OCI-LY7 (cell line): ENCODE measurements at regions of chr2 and their contacts with region 1.

Region 1: GRCh38 chr2:65396348-65397026 is 35.9 kb downstream of the SPRED2 start:
- DNase-seq: peak; percentile 57
- H3K4me3 ChIP-seq: peak overlapping the region; percentile 55
- H3K27ac ChIP-seq: peak overlapping the region; percentile 96
- H3K4me1 ChIP-seq: peaks cover 79% of the 10 kb centered on the region
- CTCF ChIP-seq: no peak

Region 2: GRCh38 chr2:65204461-65205210 is 191.9 kb before region 1 on chr2:
- CTCF ChIA-PET with region 1: no interaction called
- POLR2A ChIA-PET with region 1: no interaction called
- intact Hi-C with region 1: no loop called
- DNase-seq: peak; percentile 50
- H3K4me3 ChIP-seq: no peak overlapping the region
- H3K27ac ChIP-seq: no peak overlapping the region
- H3K4me1 ChIP-seq: peaks cover 23% of the 10 kb centered on the region
- CTCF ChIP-seq: no peak

Region 3: GRCh38 chr2:65382776-65383357 is 13.6 kb before region 1 on chr2:
- CTCF ChIA-PET with region 1: no interaction called
- POLR2A ChIA-PET with region 1: interaction called, 20 read pairs
- intact Hi-C with region 1: no loop called
- DNase-seq: peak; percentile 85
- H3K4me3 ChIP-seq: peak overlapping the region; percentile 51
- H3K27ac ChIP-seq: peak overlapping the region; percentile 89
- H3K4me1 ChIP-seq: peaks cover 87% of the 10 kb centered on the region
- CTCF ChIP-seq: peak; percentile 82

Region 4: DNA sequence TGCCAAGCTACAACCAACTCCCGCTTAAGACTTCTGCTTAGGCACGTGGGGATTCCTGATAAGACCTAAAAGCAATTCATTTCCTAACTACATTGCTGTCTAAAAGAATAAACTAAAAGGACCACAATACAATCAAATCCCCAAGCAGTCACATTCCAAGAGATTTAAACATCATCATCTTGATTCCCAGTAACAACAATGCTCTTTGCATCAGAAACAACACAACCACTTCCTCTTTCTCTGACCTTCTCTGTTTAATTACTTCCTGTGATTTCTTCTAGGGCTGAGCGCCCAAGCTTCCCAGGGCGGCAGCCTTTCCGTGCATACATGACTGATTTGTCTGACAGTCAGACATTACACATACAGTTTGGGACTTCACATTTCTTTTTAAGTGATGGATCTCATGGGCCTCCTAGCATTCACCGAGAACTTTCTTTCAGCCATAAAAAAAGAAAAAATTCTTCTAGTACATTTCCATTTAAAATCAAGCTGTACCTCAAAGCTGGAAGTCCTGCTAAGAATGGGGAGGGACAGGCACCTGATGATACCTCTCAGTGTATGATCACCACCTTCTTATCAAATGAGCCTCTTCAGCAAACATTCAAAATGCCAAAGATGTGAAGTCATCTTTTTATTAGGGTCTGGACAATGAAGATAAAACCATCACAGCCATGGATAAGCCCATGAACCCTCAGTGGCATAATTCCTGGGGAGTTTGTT is 24.4 kb after region 1 on chr2:
- CTCF ChIA-PET with region 1: no interaction called
- POLR2A ChIA-PET with region 1: interaction called, 15 read pairs
- intact Hi-C with region 1: no loop called
- DNase-seq: peak; percentile 83
- H3K4me3 ChIP-seq: peak overlapping the region; percentile 47
- H3K27ac ChIP-seq: peak overlapping the region; percentile 75
- H3K4me1 ChIP-seq: peaks cover 74% of the 10 kb centered on the region
- CTCF ChIP-seq: no peak